ENCODE measurements at regions of chr16 and their contacts with region 1.

Region 1: GRCh38 chr16:22297114-22297878 is at the start of gene POLR3E:
- DNase-seq: peak; percentile 100
- H3K4me3 Mint-ChIP-seq: peak within 1 kb of the TSS; percentile 90
- H3K27ac Mint-ChIP-seq: peak within 1 kb of the TSS; percentile 94
- H3K4me1 Mint-ChIP-seq: peaks cover 37% of the 10 kb centered on the region
- H3K27me3 Mint-ChIP-seq: no peaks in the 10 kb centered on the region
- total RNA-seq, gene POLR3E: 72.9 to 74.7 TPM

Region 2: GRCh38 chr16:21523411-21524067 is 773.8 kb before region 1 on chr16:
- CTCF ChIA-PET with region 1: no interaction called
- intact Hi-C with region 1: loop called (anchors 5 kb)
- DNase-seq: no peak
- H3K4me3 Mint-ChIP-seq: no peak overlapping the region
- H3K27ac Mint-ChIP-seq: no peak overlapping the region
- H3K4me1 Mint-ChIP-seq: no peaks in the 10 kb centered on the region
- H3K27me3 Mint-ChIP-seq: no peaks in the 10 kb centered on the region

Region 3: GRCh38 chr16:22001591-22001990 is 295.7 kb before region 1 on chr16:
- CTCF ChIA-PET with region 1: interaction called, 3 read pairs
- intact Hi-C with region 1: loop called (anchors 1 kb)
- DNase-seq: no peak
- H3K4me3 Mint-ChIP-seq: no peak overlapping the region
- H3K27ac Mint-ChIP-seq: no peak overlapping the region
- H3K4me1 Mint-ChIP-seq: peaks cover 7% of the 10 kb centered on the region
- H3K27me3 Mint-ChIP-seq: no peaks in the 10 kb centered on the region

Region 4: GRCh38 chr16:22206013-22206841 is 91.1 kb before region 1 on chr16 and contains the start of gene EEF2K:
- CTCF ChIA-PET with region 1: interaction called, 27 read pairs
- intact Hi-C with region 1: loop called (anchors 1 kb)
- DNase-seq: peak; percentile 88
- H3K4me3 Mint-ChIP-seq: peak within 1 kb of the TSS; percentile 94
- H3K27ac Mint-ChIP-seq: peak within 1 kb of the TSS; percentile 88
- H3K4me1 Mint-ChIP-seq: peaks cover 41% of the 10 kb centered on the region
- H3K27me3 Mint-ChIP-seq: no peaks in the 10 kb centered on the region
- total RNA-seq, gene EEF2K: 9.8 to 10.0 TPM

Region 5: GRCh38 chr16:22374311-22375116 is 77.2 kb after region 1 on chr16 and contains the start of gene CDR2:
- CTCF ChIA-PET with region 1: interaction called, 3 read pairs
- intact Hi-C with region 1: loop called (anchors 1 kb)
- DNase-seq: peak; percentile 99
- H3K4me3 Mint-ChIP-seq: peak within 1 kb of the TSS; percentile 92
- H3K27ac Mint-ChIP-seq: peak within 1 kb of the TSS; percentile 89
- H3K4me1 Mint-ChIP-seq: peaks cover 37% of the 10 kb centered on the region
- H3K27me3 Mint-ChIP-seq: no peaks in the 10 kb centered on the region
- total RNA-seq, gene CDR2: 42.5 to 42.8 TPM